ENCODE measurements at regions of chr9 and their contacts with region 1.

Region 1: GRCh38 chr9:100352727-100353505 is at the start of gene TEX10:
- DNase-seq: peak; percentile 78 to 93 (median 84)
- H3K4me3 ChIP-seq: peak within 1 kb of the TSS; percentile 62 to 99 (median 91)
- H3K27ac ChIP-seq: peak within 1 kb of the TSS in 58 of 59 donors; percentile 13 to 89 (median 77)
- H3K27me3 ChIP-seq: no peaks in the 10 kb centered on the region
- CTCF ChIP-seq: peak in 26 of 56 donors; percentile 9 to 48 (median 22)
- total RNA-seq, gene TEX10: 8.5 to 18.4 (median 13.1) TPM

Region 2: DNA sequence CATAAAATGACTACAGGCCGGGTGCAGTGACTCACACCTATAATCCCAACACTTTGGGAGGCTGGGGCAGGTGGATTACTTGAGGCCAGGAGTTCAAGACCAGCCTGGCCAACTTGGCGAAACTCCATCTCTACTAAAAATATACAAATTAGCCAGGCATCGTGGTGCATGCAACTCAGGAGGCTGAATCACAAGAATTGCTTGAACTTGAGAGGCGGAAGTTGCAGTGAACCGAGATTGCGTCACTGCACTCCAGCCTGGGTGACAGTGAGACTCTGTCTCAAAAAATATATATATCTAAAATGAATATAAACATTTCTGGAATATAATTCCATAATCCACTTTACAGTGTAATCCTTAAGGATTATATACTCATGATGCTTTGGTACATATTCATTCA is 66.7 kb before region 1 on chr9:
- intact Hi-C with region 1: no loop called
- DNase-seq: no peak
- H3K4me3 ChIP-seq: no peak overlapping the region
- H3K27ac ChIP-seq: no peak overlapping the region
- H3K27me3 ChIP-seq: no peaks in the 10 kb centered on the region
- CTCF ChIP-seq: no peak

Region 3: DNA sequence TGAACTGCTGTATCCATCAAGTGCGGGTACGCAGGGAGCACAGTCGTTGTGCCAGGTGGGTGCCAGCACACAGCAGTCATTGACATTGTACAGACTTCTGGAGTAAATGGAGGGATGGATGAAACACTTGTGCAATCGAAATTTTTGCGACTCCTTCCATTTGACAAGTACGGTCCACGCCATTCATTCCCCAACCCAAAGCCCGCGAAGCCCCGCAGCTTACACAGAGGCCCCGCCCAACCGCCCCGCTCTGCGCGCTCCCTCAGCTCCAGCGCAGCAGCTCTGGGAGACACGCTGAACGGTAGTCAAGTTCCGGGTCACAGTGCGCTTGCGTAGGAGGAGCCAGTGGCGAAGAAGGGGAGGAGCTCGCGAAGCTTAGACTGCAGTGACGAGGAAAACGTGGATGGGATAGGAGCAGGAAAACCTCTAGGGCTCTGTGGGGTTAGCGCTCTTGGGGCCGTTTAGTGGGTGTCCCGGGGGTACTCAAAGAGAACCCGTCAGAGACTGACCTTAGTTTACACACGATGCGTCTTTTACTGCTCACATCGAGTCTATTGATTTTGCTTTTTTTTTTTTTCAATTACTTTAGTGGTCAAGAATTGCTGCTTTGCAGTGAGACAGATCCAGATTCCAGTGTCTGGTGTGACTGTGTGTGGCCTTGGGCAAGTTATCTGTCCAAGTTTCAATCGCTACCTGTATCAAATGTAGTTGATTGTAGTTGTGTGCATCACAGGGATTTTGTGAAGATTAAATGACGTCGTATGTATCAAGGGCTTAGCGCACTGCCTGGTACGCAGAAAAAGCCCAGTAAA is 58.8 kb after region 1 on chr9:
- intact Hi-C with region 1: loop called in 1 of 2 experiments (anchors 2 kb)
- DNase-seq: peak; percentile 85 to 95 (median 92)
- H3K4me3 ChIP-seq: peak overlapping the region; percentile 39 to 81 (median 63)
- H3K27ac ChIP-seq: peak overlapping the region in 23 of 59 donors; percentile 2 to 72 (median 46)
- H3K27me3 ChIP-seq: peaks cover 0 to 2% (median 0%) of the 10 kb centered on the region in 45 donors
- CTCF ChIP-seq: peak in 30 of 56 donors; percentile 8 to 57 (median 32)

Region 4: DNA sequence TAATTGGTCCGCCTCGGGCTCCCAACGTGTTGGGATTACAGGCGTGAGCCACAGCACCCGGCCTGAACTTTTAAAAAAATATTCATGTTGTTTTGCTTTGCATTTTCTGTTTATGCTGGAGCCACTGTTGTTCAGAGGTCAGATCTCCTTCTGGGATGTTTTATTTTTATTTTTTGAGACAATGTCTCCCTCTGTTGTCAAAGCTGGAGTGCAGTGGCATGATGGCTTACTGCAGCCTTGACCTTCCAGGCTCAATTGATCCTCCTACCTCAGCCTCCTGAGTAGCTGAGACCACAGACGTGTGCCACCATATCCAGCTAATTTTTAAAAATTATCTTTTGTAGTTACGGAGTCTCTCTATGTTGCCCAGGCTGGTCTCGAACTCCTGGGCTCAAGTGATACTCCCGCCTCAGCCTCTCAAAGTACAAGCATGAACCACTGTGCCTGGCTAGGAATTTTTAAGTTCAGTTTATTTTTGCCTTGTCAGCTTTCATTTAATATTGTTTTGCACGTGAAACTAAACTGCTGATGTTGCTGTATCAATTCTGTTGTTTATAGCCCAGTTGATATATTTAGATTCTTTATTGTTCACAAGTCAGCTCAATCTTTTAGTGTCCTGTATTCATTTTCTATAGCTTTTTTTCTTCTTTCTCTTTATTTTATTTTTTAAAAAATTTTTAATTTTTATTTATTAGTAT is 133.7 kb after region 1 on chr9:
- intact Hi-C with region 1: no loop called
- DNase-seq: no peak
- H3K4me3 ChIP-seq: no peak overlapping the region
- H3K27ac ChIP-seq: peak overlapping the region in 8 of 59 donors; percentile 14 to 38 (median 30)
- H3K27me3 ChIP-seq: no peaks in the 10 kb centered on the region
- CTCF ChIP-seq: peak in 19 of 56 donors; percentile 7 to 58 (median 29)

Region 5: GRCh38 chr9:100679834-100680233 is 326.9 kb after region 1 on chr9:
- intact Hi-C with region 1: no loop called
- DNase-seq: no peak
- H3K4me3 ChIP-seq: no peak overlapping the region
- H3K27ac ChIP-seq: no peak overlapping the region
- H3K27me3 ChIP-seq: no peaks in the 10 kb centered on the region
- CTCF ChIP-seq: no peak

Measured in dorsolateral prefrontal cortex (tissue), 120 donors.